Heart left ventricle (tissue), 16 donors: ENCODE measurements at regions of chr6 and their contacts with region 1.

Region 1: GRCh38 chr6:50128420-50129005 is 78.8 kb upstream of the DEFB112 start:
- DNase-seq: no peak
- ATAC-seq: no peak
- H3K4me3 ChIP-seq: no peak overlapping the region
- H3K27ac ChIP-seq: no peak overlapping the region
- H3K4me1 ChIP-seq: no peaks in the 10 kb centered on the region
- H3K27me3 ChIP-seq: peaks cover 0 to 13% (median 0%) of the 10 kb centered on the region in 9 donors
- CTCF ChIP-seq: peak in 10 of 12 donors; percentile 37 to 62 (median 51)
- POLR2A ChIP-seq: no peak

Region 2: GRCh38 chr6:49556429-49556841 is 572.1 kb before region 1 on chr6:
- intact Hi-C with region 1: no loop called
- DNase-seq: no peak
- ATAC-seq: peak in 1 of 4 donors; percentile 24
- H3K4me3 ChIP-seq: no peak overlapping the region
- H3K27ac ChIP-seq: no peak overlapping the region
- H3K4me1 ChIP-seq: peaks cover 0 to 7% (median 3%) of the 10 kb centered on the region in 12 donors
- H3K27me3 ChIP-seq: peaks cover 0 to 23% (median 2%) of the 10 kb centered on the region in 9 donors
- CTCF ChIP-seq: no peak
- POLR2A ChIP-seq: no peak

Region 3: DNA sequence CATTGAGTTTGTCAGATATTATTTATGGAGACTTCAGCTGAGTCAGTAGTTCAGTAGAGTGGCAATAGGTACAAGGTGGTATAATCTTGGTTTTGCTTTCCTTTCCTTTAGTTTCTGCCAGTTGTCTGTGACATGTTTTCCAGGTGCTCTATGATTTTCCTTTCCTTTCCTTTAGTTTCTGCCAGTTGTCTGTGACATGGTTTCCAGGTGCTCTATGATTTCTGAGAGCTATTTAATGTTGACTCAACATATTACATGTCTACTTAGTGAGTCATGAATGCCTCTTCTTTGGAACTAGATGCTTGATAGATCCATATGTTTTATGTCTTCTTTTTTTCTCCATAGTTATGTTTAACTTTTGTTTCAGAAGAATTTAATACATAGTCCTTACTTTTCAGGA is 107.7 kb after region 1 on chr6:
- intact Hi-C with region 1: no loop called
- DNase-seq: no peak
- ATAC-seq: no peak
- H3K4me3 ChIP-seq: no peak overlapping the region
- H3K27ac ChIP-seq: no peak overlapping the region
- H3K4me1 ChIP-seq: no peaks in the 10 kb centered on the region
- H3K27me3 ChIP-seq: no peaks in the 10 kb centered on the region
- CTCF ChIP-seq: no peak
- POLR2A ChIP-seq: no peak

Region 4: GRCh38 chr6:50602292-50602691 is 473.8 kb after region 1 on chr6:
- intact Hi-C with region 1: loop called in 9 of 10 experiments (anchors 5 to 10 kb)
- DNase-seq: no peak
- ATAC-seq: no peak
- H3K4me3 ChIP-seq: no peak overlapping the region
- H3K27ac ChIP-seq: no peak overlapping the region
- H3K4me1 ChIP-seq: no peaks in the 10 kb centered on the region
- H3K27me3 ChIP-seq: peaks cover 0 to 4% (median 0%) of the 10 kb centered on the region in 9 donors
- CTCF ChIP-seq: peak; percentile 65 to 86 (median 74)
- POLR2A ChIP-seq: no peak

Region 5: GRCh38 chr6:50791900-50792508 is 663.5 kb after region 1 on chr6:
- intact Hi-C with region 1: loop called in 2 of 10 experiments (anchors 5 to 10 kb)
- DNase-seq: no peak
- ATAC-seq: no peak
- H3K4me3 ChIP-seq: no peak overlapping the region
- H3K27ac ChIP-seq: no peak overlapping the region
- H3K4me1 ChIP-seq: peaks cover 0 to 2% (median 0%) of the 10 kb centered on the region in 12 donors
- H3K27me3 ChIP-seq: peaks cover 0 to 14% (median 0%) of the 10 kb centered on the region in 9 donors
- CTCF ChIP-seq: peak; percentile 33 to 75 (median 55)
- POLR2A ChIP-seq: no peak